ENCODE measurements at regions of chr13 and their contacts with region 1.

Region 1: DNA sequence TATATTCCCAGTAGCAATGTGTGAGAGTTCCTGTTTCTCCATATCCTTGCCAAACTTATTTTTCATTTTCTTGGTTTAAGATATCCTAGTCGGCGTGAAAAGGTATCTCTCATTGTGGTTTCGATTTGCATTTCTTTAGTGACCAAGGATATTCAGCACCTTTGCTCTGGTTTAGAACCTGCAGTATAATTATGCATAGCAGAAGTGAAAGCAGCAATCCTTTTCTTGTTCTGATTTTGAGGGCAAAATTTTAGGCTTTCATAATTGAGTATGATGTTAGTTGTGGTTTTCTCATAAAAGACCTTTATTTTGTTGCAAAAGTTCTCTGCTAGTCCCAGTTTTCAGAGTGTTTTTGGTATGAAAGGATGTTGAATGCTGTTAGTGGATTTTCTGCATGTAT is 491.0 kb downstream of the FGF9 start:
- DNase-seq: no peak
- H3K4me3 Mint-ChIP-seq: peak overlapping the region; percentile 34
- H3K27ac Mint-ChIP-seq: no peak overlapping the region
- H3K4me1 Mint-ChIP-seq: peaks cover 39% of the 10 kb centered on the region
- H3K27me3 Mint-ChIP-seq: no peaks in the 10 kb centered on the region

Region 2: DNA sequence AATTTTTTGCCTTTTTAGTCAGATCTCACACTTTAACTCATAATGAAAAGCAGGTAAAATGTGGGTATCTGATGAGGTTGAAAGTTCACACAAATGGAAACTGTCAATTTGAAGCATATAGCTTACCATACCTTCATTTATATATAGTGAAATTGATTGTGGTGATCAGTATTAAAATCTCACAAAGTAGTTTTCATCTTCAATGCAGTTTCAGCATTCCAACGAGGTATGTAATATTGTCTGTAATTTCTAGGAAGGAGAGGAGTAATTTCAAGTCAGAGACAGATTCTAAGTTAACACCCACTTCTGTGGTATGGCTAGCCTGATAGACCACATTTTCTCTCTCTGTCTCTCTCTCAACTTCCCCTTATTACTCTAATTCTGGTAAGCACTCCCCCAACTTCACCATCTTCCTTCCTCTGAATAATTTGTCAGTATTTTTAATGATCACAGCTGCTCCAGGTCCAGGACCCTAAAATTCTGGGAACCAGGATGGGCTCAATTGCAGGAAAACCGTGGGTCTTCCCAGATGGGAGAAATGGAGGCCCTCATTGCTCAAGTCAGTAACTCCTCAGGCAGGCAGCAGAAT is 35.3 kb before region 1 on chr13:
- CTCF ChIA-PET with region 1: no interaction called
- POLR2A ChIA-PET with region 1: no interaction called
- intact Hi-C with region 1: loop called (anchors 1 kb)
- DNase-seq: no peak
- H3K4me3 Mint-ChIP-seq: no peak overlapping the region
- H3K27ac Mint-ChIP-seq: no peak overlapping the region
- H3K4me1 Mint-ChIP-seq: peaks cover 34% of the 10 kb centered on the region
- H3K27me3 Mint-ChIP-seq: no peaks in the 10 kb centered on the region

Region 3: GRCh38 chr13:22141716-22142115 is 20.2 kb before region 1 on chr13:
- CTCF ChIA-PET with region 1: no interaction called
- POLR2A ChIA-PET with region 1: no interaction called
- intact Hi-C with region 1: no loop called
- DNase-seq: no peak
- H3K4me3 Mint-ChIP-seq: no peak overlapping the region
- H3K27ac Mint-ChIP-seq: no peak overlapping the region
- H3K4me1 Mint-ChIP-seq: peaks cover 21% of the 10 kb centered on the region
- H3K27me3 Mint-ChIP-seq: no peaks in the 10 kb centered on the region